PC-9 (cell line): ENCODE measurements at regions of chr4 and their contacts with region 1.

Region 1: GRCh38 chr4:180664766-180665368 is 1578.3 kb upstream of the TENM3 start:
- DNase-seq: peak; percentile 34 to 47
- H3K4me3 ChIP-seq: no peak overlapping the region
- H3K27ac ChIP-seq: no peak overlapping the region
- H3K4me1 ChIP-seq: no peaks in the 10 kb centered on the region
- H3K27me3 ChIP-seq: no peaks in the 10 kb centered on the region
- CTCF ChIP-seq: peak; percentile 66

Region 2: GRCh38 chr4:179867300-179867878 is 797.5 kb before region 1 on chr4:
- CTCF ChIA-PET with region 1: no interaction called
- POLR2A ChIA-PET with region 1: no interaction called
- intact Hi-C with region 1: loop called (anchors 1 kb)
- DNase-seq: peak in 1 of 2 experiments; percentile 48
- H3K4me3 ChIP-seq: no peak overlapping the region
- H3K27ac ChIP-seq: no peak overlapping the region
- H3K4me1 ChIP-seq: no peaks in the 10 kb centered on the region
- H3K27me3 ChIP-seq: no peaks in the 10 kb centered on the region
- CTCF ChIP-seq: peak; percentile 66

Region 3: DNA sequence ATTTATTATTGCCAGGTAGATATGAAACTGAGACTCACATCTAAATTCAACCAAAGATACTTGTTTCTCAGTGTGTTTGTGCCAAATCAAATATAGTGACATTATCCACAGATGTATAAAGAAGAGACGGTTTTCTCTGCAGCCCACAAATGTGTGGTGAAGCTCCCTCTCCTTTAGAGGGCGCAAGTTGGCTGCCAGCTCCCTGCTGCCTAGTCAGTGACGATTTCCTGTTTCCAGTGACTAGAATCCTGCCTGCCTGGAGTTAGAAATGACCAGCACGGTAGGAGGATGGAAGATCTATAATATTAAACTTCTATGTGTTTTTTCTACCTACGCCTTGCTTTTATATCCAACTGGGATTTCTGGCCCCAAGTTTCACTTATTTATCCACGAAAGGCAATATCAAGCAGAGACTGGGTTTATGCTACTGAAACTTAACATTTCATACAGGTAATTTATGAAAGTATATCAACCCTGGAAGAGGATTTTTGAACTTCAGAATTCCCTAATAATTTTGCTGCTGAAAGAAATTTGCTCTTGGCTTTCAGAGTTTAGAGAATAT is 215.4 kb before region 1 on chr4:
- CTCF ChIA-PET with region 1: interaction called, 4 read pairs
- POLR2A ChIA-PET with region 1: no interaction called
- intact Hi-C with region 1: loop called (anchors 1 kb)
- DNase-seq: peak in 1 of 2 experiments; percentile 31
- H3K4me3 ChIP-seq: no peak overlapping the region
- H3K27ac ChIP-seq: no peak overlapping the region
- H3K4me1 ChIP-seq: no peaks in the 10 kb centered on the region
- H3K27me3 ChIP-seq: no peaks in the 10 kb centered on the region
- CTCF ChIP-seq: peak; percentile 40